Activated B cell treated with CpG ODN at 0.5 μM for 24 hours (primary cell): ENCODE measurements at regions of chr9 and their contacts with region 1.

Region 1: DNA sequence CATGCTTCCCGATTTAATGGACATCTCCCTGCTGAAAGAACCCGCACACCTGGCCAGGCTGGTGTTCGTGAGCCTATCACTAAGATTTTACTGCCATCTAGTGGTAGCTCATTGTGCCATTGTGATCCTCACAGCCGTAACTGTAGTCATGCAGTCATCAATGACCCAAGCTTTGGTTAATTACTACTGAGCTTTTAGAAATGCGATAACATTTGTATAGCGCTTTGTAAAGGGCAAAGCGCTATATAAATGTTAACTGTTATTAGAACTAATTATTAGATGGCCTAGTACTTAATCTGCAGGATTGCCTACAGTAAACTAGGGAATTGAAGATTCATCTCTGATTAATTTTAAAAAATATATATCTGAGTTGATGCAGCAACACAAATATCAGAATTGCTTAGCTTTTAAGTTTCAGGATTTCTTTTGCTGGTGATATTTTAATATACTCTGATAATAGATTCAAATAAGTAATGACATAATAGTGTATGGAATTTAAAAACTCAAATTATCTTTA is 90.2 kb downstream of the HACD4 start:
- DNase-seq: no peak
- ATAC-seq: peak; percentile 75
- H3K4me3 Mint-ChIP-seq: no peak overlapping the region
- H3K27ac Mint-ChIP-seq: no peak overlapping the region
- H3K4me1 Mint-ChIP-seq: peaks cover 3% of the 10 kb centered on the region
- H3K27me3 Mint-ChIP-seq: no peaks in the 10 kb centered on the region
- CTCF ChIP-seq: peak; percentile 90

Region 2: DNA sequence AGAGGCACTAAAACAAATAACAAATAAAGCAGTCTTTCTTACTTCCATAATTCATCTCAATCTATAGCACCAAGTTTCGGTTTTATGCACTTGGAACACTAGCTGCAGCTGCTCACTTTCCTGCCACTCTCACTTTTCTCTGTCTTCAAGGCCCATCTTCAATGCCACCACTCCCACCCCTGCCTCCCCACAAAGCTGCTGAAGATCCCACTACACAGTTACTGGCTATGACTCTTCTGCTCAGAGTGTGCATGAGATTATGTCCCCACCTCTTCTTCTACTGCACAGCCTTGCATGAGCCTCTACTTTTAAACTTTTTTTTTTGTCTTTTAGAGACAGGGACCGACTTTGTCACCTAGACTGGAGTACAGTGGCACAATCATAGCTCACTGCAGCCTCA is 1985.6 kb before region 1 on chr9:
- CTCF ChIA-PET with region 1: no interaction called
- POLR2A ChIA-PET with region 1: no interaction called
- intact Hi-C with region 1: no loop called
- DNase-seq: no peak
- ATAC-seq: no peak
- H3K4me3 Mint-ChIP-seq: no peak overlapping the region
- H3K27ac Mint-ChIP-seq: no peak overlapping the region
- H3K4me1 Mint-ChIP-seq: no peaks in the 10 kb centered on the region
- H3K27me3 Mint-ChIP-seq: no peaks in the 10 kb centered on the region
- CTCF ChIP-seq: no peak

Region 3: DNA sequence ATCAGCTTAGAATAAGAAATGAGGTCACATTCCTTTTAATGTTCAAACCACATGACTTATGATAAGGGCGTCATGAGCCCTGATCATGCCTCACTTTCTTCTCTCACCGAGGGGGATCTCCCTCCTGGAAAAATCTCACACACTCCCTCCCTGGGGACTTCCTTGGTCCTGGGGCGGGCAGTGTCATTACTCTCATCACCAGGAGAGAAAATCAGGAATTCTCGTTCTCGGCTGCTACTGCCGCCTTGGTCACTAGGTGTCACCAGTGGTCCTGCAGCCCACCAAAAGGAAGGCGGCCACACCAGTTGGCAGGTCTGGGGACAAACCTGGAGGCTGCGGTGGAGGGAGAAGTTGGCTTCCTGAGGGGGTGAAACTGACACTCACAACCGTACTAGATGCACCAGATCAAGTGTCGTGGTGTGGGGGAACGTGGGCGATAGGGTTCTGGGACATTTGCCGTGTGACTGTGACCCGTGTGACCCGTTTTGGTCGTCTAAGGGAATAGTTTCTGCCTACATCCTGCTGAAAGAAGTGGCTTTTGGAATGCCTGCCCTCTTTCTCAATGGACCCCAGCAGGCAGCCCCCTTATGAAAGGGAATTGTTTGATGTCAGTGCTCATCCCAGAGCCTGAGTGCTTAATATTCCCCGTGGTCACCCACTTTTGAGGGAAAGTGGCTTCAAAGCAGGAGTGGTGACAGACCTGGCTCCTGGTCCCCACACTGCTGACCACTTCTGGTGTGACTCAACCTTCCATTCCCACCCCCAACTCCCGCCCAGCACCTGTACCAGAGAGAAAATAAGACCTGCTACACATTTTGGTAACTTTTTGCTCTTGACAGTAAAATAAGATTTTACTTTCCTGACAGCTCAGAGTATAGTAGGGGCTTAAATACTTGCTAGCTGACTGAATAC is 1469.2 kb before region 1 on chr9:
- CTCF ChIA-PET with region 1: no interaction called
- POLR2A ChIA-PET with region 1: no interaction called
- intact Hi-C with region 1: loop called (anchors 2 kb)
- DNase-seq: no peak
- ATAC-seq: peak; percentile 79
- H3K4me3 Mint-ChIP-seq: peak overlapping the region; percentile 78
- H3K27ac Mint-ChIP-seq: no peak overlapping the region
- H3K4me1 Mint-ChIP-seq: peaks cover 4% of the 10 kb centered on the region
- H3K27me3 Mint-ChIP-seq: no peaks in the 10 kb centered on the region
- CTCF ChIP-seq: no peak

Region 4: GRCh38 chr9:19925817-19926503 is 1015.3 kb before region 1 on chr9:
- CTCF ChIA-PET with region 1: interaction called, 39 read pairs
- POLR2A ChIA-PET with region 1: no interaction called
- intact Hi-C with region 1: loop called (anchors 1 kb)
- DNase-seq: peak; percentile 37
- ATAC-seq: peak; percentile 99
- H3K4me3 Mint-ChIP-seq: peak overlapping the region; percentile 49
- H3K27ac Mint-ChIP-seq: no peak overlapping the region
- H3K4me1 Mint-ChIP-seq: peaks cover 11% of the 10 kb centered on the region
- H3K27me3 Mint-ChIP-seq: peaks cover 19% of the 10 kb centered on the region
- CTCF ChIP-seq: no peak

Region 5: DNA sequence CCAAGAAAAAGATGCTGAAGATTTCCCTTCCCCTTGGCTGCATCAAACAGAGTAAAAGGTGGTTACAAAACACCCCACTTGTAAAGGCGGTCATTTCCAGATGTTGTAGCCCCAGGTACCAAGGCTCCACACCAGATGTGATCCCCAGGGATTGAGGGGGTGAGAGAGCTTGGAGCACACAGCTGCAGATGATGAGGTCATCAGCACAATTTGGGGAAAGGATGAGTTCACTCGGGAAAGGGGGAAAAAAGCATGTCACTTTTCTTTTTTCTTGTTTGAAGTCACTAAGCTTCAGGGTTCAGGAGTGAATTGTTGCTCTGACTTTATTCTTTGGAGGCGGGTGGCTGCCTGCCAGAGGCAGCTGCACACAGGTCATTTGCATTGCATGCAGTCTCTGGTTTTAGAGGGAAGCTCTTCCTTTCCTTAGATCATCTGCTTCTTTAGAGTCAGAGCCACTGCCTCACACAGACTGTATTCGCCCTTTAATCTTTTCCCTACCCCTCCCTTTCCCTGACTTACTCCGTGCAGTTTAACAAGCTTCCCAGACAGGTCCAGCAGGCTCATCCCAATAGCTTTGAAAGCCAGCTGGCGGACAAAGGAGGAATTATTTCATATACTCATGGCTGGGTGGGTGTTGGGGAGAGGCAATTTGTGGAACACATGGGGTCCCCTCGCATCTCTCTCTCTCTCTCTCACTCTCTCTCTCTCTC is 743.1 kb before region 1 on chr9:
- CTCF ChIA-PET with region 1: no interaction called
- POLR2A ChIA-PET with region 1: no interaction called
- intact Hi-C with region 1: loop called (anchors 10 kb)
- DNase-seq: no peak
- ATAC-seq: no peak
- H3K4me3 Mint-ChIP-seq: no peak overlapping the region
- H3K27ac Mint-ChIP-seq: no peak overlapping the region
- H3K4me1 Mint-ChIP-seq: peaks cover 13% of the 10 kb centered on the region
- H3K27me3 Mint-ChIP-seq: peaks cover 4% of the 10 kb centered on the region
- CTCF ChIP-seq: no peak

Region 6: GRCh38 chr9:20426019-20426418 is 515.2 kb before region 1 on chr9:
- CTCF ChIA-PET with region 1: no interaction called
- POLR2A ChIA-PET with region 1: no interaction called
- intact Hi-C with region 1: loop called (anchors 1 kb)
- DNase-seq: no peak
- ATAC-seq: no peak
- H3K4me3 Mint-ChIP-seq: no peak overlapping the region
- H3K27ac Mint-ChIP-seq: no peak overlapping the region
- H3K4me1 Mint-ChIP-seq: peaks cover 11% of the 10 kb centered on the region
- H3K27me3 Mint-ChIP-seq: no peaks in the 10 kb centered on the region
- CTCF ChIP-seq: no peak

Region 7: DNA sequence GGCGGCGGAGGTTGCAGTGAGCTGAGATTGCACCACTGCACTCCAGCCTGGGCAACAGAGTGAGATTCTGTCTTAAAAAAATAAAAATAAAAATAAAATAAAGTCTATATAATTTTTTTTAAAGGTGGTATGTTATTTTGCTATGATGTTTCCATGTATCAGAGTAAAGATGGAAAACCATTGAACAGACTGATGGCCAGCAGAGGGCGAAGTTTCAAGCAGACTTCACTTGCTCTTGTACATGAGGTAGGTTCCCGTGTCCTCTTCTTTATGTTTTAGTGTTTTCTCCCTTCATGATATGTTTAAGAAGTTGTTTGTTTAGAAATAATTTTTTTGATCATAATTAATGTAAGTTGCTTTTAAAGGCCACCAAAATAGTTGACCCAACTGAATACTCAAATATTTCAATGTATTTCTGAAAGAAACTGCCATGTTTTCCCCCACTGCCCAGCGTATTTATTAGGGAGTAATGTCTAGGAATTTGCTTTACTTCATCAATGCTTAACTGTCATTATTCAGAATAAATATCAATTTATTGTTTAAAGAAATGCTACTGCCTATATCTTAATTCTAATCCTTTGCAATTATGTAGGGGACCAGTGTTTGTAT is 56.1 kb before region 1 on chr9:
- CTCF ChIA-PET with region 1: interaction called, 5 read pairs
- POLR2A ChIA-PET with region 1: no interaction called
- intact Hi-C with region 1: loop called (anchors 2 kb)
- DNase-seq: no peak
- ATAC-seq: no peak
- H3K4me3 Mint-ChIP-seq: no peak overlapping the region
- H3K27ac Mint-ChIP-seq: no peak overlapping the region
- H3K4me1 Mint-ChIP-seq: no peaks in the 10 kb centered on the region
- H3K27me3 Mint-ChIP-seq: no peaks in the 10 kb centered on the region
- CTCF ChIP-seq: no peak